ENCODE measurements at regions of chr14 and their contacts with region 1.

Region 1: GRCh38 chr14:103292426-103293374 is 41.3 kb upstream of the EIF5 start:
- DNase-seq: peak; percentile 68 to 89 (median 78)
- H3K4me3 ChIP-seq: no peak overlapping the region
- H3K27ac ChIP-seq: no peak overlapping the region
- H3K27me3 ChIP-seq: peaks cover 0 to 13% (median 0%) of the 10 kb centered on the region in 45 donors
- CTCF ChIP-seq: peak; percentile 61 to 97 (median 93)

Region 2: GRCh38 chr14:103078093-103078749 is 214.5 kb before region 1 on chr14:
- intact Hi-C with region 1: loop called (anchors 5 to 10 kb)
- DNase-seq: peak; percentile 72 to 83 (median 80)
- H3K4me3 ChIP-seq: no peak overlapping the region
- H3K27ac ChIP-seq: no peak overlapping the region
- H3K27me3 ChIP-seq: peaks cover 0 to 2% (median 0%) of the 10 kb centered on the region in 45 donors
- CTCF ChIP-seq: peak in 55 of 56 donors; percentile 16 to 79 (median 68)

Region 3: GRCh38 chr14:103104654-103105452 is 187.8 kb before region 1 on chr14:
- intact Hi-C with region 1: loop called (anchors 2 kb)
- DNase-seq: peak in 7 of 10 donors; percentile 48 to 79 (median 58)
- H3K4me3 ChIP-seq: peak overlapping the region in 38 of 59 donors; percentile 10 to 52 (median 36)
- H3K27ac ChIP-seq: no peak overlapping the region
- H3K27me3 ChIP-seq: peaks cover 0 to 44% (median 34%) of the 10 kb centered on the region in 45 donors
- CTCF ChIP-seq: peak; percentile 61 to 98 (median 93)

Region 4: DNA sequence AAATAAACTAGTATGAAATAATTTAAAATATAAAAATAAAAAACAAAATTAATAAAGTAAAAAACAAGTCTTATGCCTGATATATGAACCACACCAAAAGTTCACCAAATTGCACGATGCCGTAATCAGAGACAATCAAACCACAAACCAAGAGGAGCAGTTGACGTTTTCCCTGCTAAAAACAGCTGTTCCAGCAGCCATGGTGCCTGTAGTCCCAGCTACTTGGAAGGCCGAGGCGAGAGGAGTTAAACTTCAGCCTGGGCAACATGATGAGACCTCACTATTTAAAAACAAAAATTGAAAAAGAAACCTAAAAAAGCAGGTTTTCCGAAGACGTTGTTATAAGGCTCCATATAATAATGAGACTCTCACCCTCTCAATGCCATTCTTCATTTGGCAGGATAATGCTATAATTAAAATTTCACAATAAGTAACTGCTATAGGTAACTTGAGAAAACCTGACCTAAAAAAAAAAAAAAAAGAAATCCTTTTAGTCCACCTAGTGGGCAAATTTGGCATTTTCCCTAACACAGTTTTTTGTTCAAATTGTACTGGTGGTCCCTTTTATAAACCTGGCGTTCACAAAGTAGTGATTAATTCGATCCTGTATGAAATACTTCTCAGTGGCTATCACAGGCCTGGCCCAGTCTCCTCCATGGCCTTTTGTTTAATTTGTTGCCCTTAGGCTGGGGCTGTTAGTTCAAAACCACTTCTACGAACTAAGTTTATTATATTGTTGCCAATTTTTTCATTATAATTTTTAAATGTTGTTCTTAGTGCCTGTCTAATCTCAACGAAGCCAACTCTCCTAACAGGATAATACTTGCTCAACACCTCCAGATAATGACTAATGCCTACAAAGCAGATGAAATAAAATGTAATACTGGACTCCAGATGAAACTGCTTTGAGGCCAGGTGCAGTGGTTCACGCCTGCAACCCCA is 107.4 kb before region 1 on chr14:
- intact Hi-C with region 1: loop called in 1 of 2 experiments (anchors 5 kb)
- DNase-seq: no peak
- H3K4me3 ChIP-seq: no peak overlapping the region
- H3K27ac ChIP-seq: no peak overlapping the region
- H3K27me3 ChIP-seq: peaks cover 0 to 50% (median 31%) of the 10 kb centered on the region in 45 donors
- CTCF ChIP-seq: peak; percentile 57 to 87 (median 71)